ENCODE measurements at regions of chr19 and their contacts with region 1.

Region 1: DNA sequence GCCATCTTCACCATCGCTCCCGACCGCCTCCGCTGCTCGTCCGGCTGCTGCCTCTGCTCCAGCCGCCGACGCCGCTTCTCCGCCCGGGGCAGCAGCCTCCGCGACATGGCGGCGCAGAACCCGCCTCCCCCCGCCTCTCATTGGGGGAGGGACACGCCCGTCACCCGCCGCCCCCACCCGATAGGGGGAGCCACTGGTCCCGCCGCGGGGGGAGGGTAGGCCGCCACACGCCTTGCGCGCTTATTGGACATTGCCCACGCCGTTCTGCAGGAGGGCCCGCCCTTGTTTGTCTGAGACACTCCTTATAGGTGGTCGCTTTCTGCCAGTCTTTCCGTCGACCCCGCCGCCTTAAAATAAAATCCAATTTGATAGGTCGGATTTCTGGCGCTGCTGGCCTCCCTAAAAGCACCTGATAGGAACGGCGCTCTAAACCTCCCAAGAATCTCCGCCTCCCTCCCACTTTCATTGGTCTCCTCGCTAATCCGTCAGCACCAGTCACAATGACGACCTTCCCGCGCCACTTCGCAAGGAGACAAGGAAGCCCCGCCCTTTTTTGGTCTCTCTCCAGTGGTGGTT is at the start of gene HNRNPL:
- DNase-seq: peak; percentile 99 to 100
- H3K4me3 ChIP-seq: peak within 1 kb of the TSS; percentile 80 to 97 (median 95)
- H3K27ac ChIP-seq: peak within 1 kb of the TSS; percentile 96
- H3K4me1 ChIP-seq: peaks cover 2 to 16% (median 11%) of the 10 kb centered on the region in 4 experiments
- H3K27me3 ChIP-seq: no peaks in the 10 kb centered on the region
- CTCF ChIP-seq: peak; percentile 26 to 48 (median 44)
- EP300 ChIP-seq: no peak; a peak in 1 of 3 replicates
- POLR2A ChIP-seq: peak; percentile 88 to 97
- RAD21 ChIP-seq: no peak
- total RNA-seq, gene HNRNPL: 711 and 779 TPM in 2 replicates

Region 2: DNA sequence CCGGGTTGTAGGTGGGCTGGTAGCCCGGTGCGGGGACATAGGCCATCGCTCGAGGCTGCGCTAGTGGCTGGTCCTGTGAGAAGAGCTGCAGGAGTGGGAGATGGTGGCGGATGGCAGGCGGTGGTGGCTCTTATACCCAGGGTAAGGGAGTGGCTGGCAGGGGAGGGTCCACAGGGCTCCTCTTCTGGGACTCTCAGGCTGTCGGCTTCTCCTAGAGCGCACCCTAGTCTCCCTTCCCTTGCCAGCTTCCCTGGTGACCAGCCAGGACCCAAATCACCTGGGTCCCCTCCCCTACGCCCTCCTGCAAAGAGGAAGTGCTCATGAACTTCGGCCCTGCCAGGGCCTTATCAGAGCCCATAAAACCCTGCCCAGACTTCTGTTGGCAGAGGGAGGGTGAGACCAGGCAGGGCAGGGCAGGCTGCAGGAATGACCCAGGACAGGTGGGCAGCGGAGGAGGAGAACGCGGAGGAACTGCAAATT is 37.1 kb before region 1 on chr19 and contains the start of gene LGALS4:
- CTCF ChIA-PET with region 1: no interaction called
- POLR2A ChIA-PET with region 1: interaction called, 17 read pairs
- DNase-seq: no peak
- H3K4me3 ChIP-seq: no peak within 1 kb of the TSS
- H3K27ac ChIP-seq: no peak within 1 kb of the TSS
- H3K4me1 ChIP-seq: no peaks in the 10 kb centered on the region
- H3K27me3 ChIP-seq: no peaks in the 10 kb centered on the region
- CTCF ChIP-seq: no peak
- EP300 ChIP-seq: no peak
- POLR2A ChIP-seq: no peak
- RAD21 ChIP-seq: no peak
- total RNA-seq, gene LGALS4: 0.37 and 0.54 TPM in 2 replicates

Region 3: GRCh38 chr19:38861368-38861767 is 11.4 kb after region 1 on chr19:
- CTCF ChIA-PET with region 1: interaction called, 7 read pairs
- POLR2A ChIA-PET with region 1: interaction called, 14 read pairs
- DNase-seq: no peak
- H3K4me3 ChIP-seq: no peak overlapping the region
- H3K27ac ChIP-seq: no peak overlapping the region
- H3K4me1 ChIP-seq: no peaks in the 10 kb centered on the region
- H3K27me3 ChIP-seq: no peaks in the 10 kb centered on the region; a peak in 1 of 7 replicates
- CTCF ChIP-seq: no peak
- EP300 ChIP-seq: no peak
- POLR2A ChIP-seq: no peak
- RAD21 ChIP-seq: no peak

Region 4: GRCh38 chr19:38877781-38878574 is 28.0 kb after region 1 on chr19 and contains the start of gene RINL:
- CTCF ChIA-PET with region 1: interaction called, 5 read pairs
- POLR2A ChIA-PET with region 1: interaction called, 35 read pairs
- DNase-seq: no peak
- H3K4me3 ChIP-seq: no peak within 1 kb of the TSS
- H3K27ac ChIP-seq: no peak within 1 kb of the TSS
- H3K4me1 ChIP-seq: peaks cover 0 to 8% (median 3%) of the 10 kb centered on the region in 4 experiments; a peak in 6 of 7 replicates
- H3K27me3 ChIP-seq: no peaks in the 10 kb centered on the region
- CTCF ChIP-seq: no peak
- EP300 ChIP-seq: no peak
- POLR2A ChIP-seq: no peak
- RAD21 ChIP-seq: no peak
- total RNA-seq, gene RINL: 11.9 and 14.2 TPM in 2 replicates

Region 5: GRCh38 chr19:38929929-38930775 is 80.2 kb after region 1 on chr19 and contains the start of gene SARS2:
- CTCF ChIA-PET with region 1: interaction called, 5 read pairs
- POLR2A ChIA-PET with region 1: interaction called, 14 read pairs
- DNase-seq: peak; percentile 95 to 96
- H3K4me3 ChIP-seq: peak within 1 kb of the TSS; percentile 62 to 93 (median 86)
- H3K27ac ChIP-seq: peak within 1 kb of the TSS; percentile 97
- H3K4me1 ChIP-seq: peaks cover 0 to 2% (median under 1%) of the 10 kb centered on the region in 4 experiments; a peak in 3 of 7 replicates
- H3K27me3 ChIP-seq: no peaks in the 10 kb centered on the region
- CTCF ChIP-seq: peak; percentile 92 to 98 (median 93)
- EP300 ChIP-seq: no peak
- POLR2A ChIP-seq: peak; percentile 97 to 99
- RAD21 ChIP-seq: peak; percentile 55 to 62
- total RNA-seq, gene SARS2: 59.2 and 68.0 TPM in 2 replicates

Region 6: GRCh38 chr19:38959618-38960017 is 109.7 kb after region 1 on chr19:
- CTCF ChIA-PET with region 1: no interaction called
- POLR2A ChIA-PET with region 1: no interaction called
- DNase-seq: no peak
- H3K4me3 ChIP-seq: no peak overlapping the region
- H3K27ac ChIP-seq: no peak overlapping the region
- H3K4me1 ChIP-seq: peaks cover 0 to 3% (median under 1%) of the 10 kb centered on the region in 4 experiments; a peak in 2 of 7 replicates
- H3K27me3 ChIP-seq: no peaks in the 10 kb centered on the region
- CTCF ChIP-seq: no peak
- EP300 ChIP-seq: no peak
- POLR2A ChIP-seq: no peak
- RAD21 ChIP-seq: no peak

Measured in H1 (cell line).